ENCODE measurements at regions of chr13 and their contacts with region 1.

Region 1: DNA sequence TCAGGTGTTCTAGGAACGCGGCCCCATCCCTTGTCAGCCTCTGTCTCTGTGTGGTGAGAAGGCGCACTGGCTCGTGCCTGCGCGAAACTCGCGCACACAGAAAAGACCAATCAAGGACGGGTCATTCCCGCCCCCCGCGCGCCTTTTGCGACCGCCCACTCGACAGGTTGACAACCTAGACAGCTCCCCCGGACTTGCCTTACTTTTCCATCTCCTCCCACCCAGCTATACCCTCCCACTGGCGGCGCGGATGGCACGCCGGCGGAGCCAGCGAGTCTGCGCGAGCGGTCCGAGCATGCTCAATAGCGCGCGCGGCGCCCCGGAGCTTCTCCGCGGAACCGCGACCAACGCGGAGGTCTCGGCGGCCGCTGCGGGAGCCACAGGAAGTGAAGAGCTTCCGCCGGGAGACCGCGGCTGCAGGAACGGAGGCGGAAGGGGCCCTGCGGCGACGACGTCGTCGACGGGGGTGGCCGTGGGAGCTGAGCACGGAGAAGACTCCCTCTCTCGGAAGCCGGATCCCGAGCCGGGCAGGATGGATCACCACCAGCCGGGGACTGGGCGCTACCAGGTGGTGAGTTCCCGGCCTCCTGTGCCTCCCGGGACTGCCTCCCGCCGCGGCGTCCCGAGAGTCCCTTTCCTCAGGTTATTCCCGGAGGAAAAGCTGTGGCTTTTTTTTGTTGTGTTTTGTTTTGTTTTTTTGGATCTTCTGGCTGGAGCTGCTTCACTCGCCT is at the start of gene NDFIP2:
- DNase-seq: peak; percentile 57 to 93 (median 75)
- ATAC-seq: peak; percentile 82
- H3K4me3 ChIP-seq: peak within 1 kb of the TSS; percentile 82
- H3K4me3 Mint-ChIP-seq: peak within 1 kb of the TSS; percentile 95
- H3K27ac ChIP-seq: peak within 1 kb of the TSS in 1 of 2 donors; percentile 46
- H3K27ac Mint-ChIP-seq: peak within 1 kb of the TSS; percentile 79
- H3K4me1 ChIP-seq: peaks cover 20% of the 10 kb centered on the region
- H3K4me1 Mint-ChIP-seq: peaks cover 51% of the 10 kb centered on the region
- H3K27me3 ChIP-seq: no peaks in the 10 kb centered on the region
- H3K27me3 Mint-ChIP-seq: no peaks in the 10 kb centered on the region
- CTCF ChIP-seq: no peak
- total RNA-seq, gene NDFIP2: 3.2 to 3.4 TPM

Region 2: DNA sequence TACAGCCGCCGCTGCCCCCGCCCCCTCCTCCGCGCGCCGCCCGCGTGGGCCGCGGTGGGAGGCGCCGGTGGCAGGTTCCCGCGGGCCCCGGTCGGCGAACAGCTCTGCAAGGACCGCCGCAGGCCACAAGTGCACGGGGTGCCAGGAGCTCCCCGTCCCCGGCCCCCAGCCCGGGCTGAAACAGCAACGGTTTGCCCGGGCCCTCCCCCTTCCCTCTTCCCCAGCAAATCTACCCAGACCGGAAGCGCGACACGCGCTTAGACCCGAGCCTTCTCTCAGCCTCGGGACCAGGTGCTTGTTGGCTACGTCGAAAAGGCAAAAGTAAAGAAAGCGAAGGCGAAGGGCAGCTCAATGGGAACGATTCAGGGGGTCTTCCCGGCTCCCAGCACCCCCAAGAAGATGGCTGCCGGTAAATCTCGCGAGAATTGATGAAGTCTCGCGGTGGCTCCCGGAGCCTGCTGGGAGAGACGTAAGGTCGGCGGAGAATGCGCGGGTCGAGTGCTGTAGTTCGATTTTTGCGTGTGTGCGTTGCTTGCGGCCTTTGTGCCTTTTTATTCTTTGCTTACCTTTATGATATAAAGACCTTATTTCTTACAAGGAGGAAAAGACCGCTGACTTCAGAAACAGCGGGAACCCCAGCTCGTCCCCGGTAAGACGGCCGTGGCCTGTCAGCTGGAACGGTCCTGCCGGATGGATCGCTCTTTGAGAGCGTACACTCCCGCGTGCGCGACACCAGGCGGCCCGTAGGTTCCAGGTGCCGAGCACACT is 75.1 kb before region 1 on chr13 and contains the start of gene RBM26:
- CTCF ChIA-PET with region 1: no interaction called
- POLR2A ChIA-PET with region 1: interaction called, 15 read pairs
- intact Hi-C with region 1: loop called in 1 of 2 experiments (anchors 5 kb)
- DNase-seq: peak; percentile 87 to 97 (median 92)
- ATAC-seq: peak; percentile 86
- H3K4me3 ChIP-seq: peak within 1 kb of the TSS; percentile 68
- H3K4me3 Mint-ChIP-seq: peak within 1 kb of the TSS; percentile 95
- H3K27ac ChIP-seq: peak within 1 kb of the TSS; percentile 93 to 95
- H3K27ac Mint-ChIP-seq: no peak within 1 kb of the TSS
- H3K4me1 ChIP-seq: peaks cover 21% of the 10 kb centered on the region
- H3K4me1 Mint-ChIP-seq: peaks cover 44% of the 10 kb centered on the region
- H3K27me3 ChIP-seq: no peaks in the 10 kb centered on the region
- H3K27me3 Mint-ChIP-seq: no peaks in the 10 kb centered on the region
- CTCF ChIP-seq: no peak
- total RNA-seq, gene RBM26: 67.3 to 68.0 TPM

Region 3: DNA sequence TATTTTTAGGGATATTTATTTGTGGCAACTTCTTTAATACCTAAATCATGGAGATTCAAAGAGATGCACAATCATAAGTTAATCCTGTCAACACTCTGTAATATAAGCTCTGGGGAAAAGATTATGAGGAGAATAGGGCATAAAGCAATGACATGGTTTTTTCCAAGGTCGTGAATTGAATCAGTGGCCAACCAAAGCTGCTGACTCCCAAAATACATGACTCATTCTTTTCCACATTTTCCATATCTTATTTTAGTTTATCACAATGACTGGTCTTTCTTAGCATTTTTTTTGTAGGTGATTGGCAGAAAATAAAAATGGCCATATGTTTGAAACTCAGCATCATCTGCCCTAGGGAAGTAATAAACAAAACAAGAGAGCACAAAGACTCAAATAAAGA is 46.6 kb before region 1 on chr13:
- CTCF ChIA-PET with region 1: no interaction called
- POLR2A ChIA-PET with region 1: no interaction called
- intact Hi-C with region 1: loop called in 1 of 2 experiments (anchors 5 kb)
- DNase-seq: no peak
- ATAC-seq: no peak
- H3K4me3 ChIP-seq: no peak overlapping the region
- H3K4me3 Mint-ChIP-seq: no peak overlapping the region
- H3K27ac ChIP-seq: no peak overlapping the region
- H3K27ac Mint-ChIP-seq: no peak overlapping the region
- H3K4me1 ChIP-seq: no peaks in the 10 kb centered on the region
- H3K4me1 Mint-ChIP-seq: no peaks in the 10 kb centered on the region
- H3K27me3 ChIP-seq: no peaks in the 10 kb centered on the region
- H3K27me3 Mint-ChIP-seq: no peaks in the 10 kb centered on the region
- CTCF ChIP-seq: no peak

Region 4: GRCh38 chr13:79451500-79451962 is 29.6 kb before region 1 on chr13:
- CTCF ChIA-PET with region 1: interaction called, 12 read pairs
- POLR2A ChIA-PET with region 1: interaction called, 8 read pairs
- intact Hi-C with region 1: no loop called
- DNase-seq: peak; percentile 53 to 93 (median 79)
- ATAC-seq: peak; percentile 99
- H3K4me3 ChIP-seq: no peak overlapping the region
- H3K4me3 Mint-ChIP-seq: peak overlapping the region; percentile 46
- H3K27ac ChIP-seq: peak overlapping the region in 1 of 2 donors; percentile 31
- H3K27ac Mint-ChIP-seq: peak overlapping the region; percentile 68
- H3K4me1 ChIP-seq: peaks cover 16% of the 10 kb centered on the region
- H3K4me1 Mint-ChIP-seq: peaks cover 63% of the 10 kb centered on the region
- H3K27me3 ChIP-seq: no peaks in the 10 kb centered on the region
- H3K27me3 Mint-ChIP-seq: no peaks in the 10 kb centered on the region
- CTCF ChIP-seq: no peak

Region 5: GRCh38 chr13:79491715-79492114 is 10.6 kb after region 1 on chr13:
- CTCF ChIA-PET with region 1: interaction called, 6 read pairs
- POLR2A ChIA-PET with region 1: interaction called, 4 read pairs
- intact Hi-C with region 1: loop called in 1 of 2 experiments (anchors 2 kb)
- DNase-seq: no peak
- ATAC-seq: no peak
- H3K4me3 ChIP-seq: no peak overlapping the region
- H3K4me3 Mint-ChIP-seq: peak overlapping the region; percentile 12
- H3K27ac ChIP-seq: no peak overlapping the region
- H3K27ac Mint-ChIP-seq: no peak overlapping the region
- H3K4me1 ChIP-seq: peaks cover 4% of the 10 kb centered on the region
- H3K4me1 Mint-ChIP-seq: peaks cover 72% of the 10 kb centered on the region
- H3K27me3 ChIP-seq: no peaks in the 10 kb centered on the region
- H3K27me3 Mint-ChIP-seq: no peaks in the 10 kb centered on the region
- CTCF ChIP-seq: no peak

Region 6: DNA sequence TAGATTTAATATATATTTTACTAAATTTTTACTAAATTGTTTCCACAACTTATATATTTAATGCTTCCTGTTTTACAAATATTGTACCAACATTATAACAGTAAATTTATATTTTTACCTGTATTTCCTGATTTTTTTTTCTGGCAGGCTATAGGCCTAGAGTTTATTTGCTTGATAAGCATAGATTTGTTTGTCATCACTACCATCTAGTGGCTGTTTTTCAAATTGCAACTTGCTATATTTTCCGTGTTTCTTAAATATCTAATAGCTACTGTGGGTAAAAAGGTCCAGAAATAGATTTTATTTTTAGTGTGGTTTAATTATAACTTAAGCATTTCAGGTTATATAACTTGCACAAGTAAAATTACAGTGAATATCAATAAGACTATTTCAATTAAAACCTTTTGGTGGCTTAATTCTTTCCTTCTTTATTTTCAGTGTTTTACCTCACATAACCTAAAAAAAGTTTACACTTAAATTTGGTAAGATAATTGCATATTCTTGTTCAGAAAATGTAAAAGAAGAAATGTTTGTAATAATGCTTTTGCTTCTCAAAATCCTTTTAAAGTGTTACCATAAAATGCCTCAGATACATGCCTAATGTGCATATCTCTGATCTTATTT is 60.4 kb after region 1 on chr13:
- CTCF ChIA-PET with region 1: interaction called, 6 read pairs
- POLR2A ChIA-PET with region 1: interaction called, 5 read pairs
- intact Hi-C with region 1: loop called in 1 of 2 experiments (anchors 5 kb)
- DNase-seq: peak in 3 of 14 experiments; percentile 73 to 82 (median 80)
- ATAC-seq: peak; percentile 63
- H3K4me3 ChIP-seq: no peak overlapping the region
- H3K4me3 Mint-ChIP-seq: no peak overlapping the region
- H3K27ac ChIP-seq: no peak overlapping the region
- H3K27ac Mint-ChIP-seq: no peak overlapping the region
- H3K4me1 ChIP-seq: no peaks in the 10 kb centered on the region
- H3K4me1 Mint-ChIP-seq: no peaks in the 10 kb centered on the region
- H3K27me3 ChIP-seq: no peaks in the 10 kb centered on the region
- H3K27me3 Mint-ChIP-seq: no peaks in the 10 kb centered on the region
- CTCF ChIP-seq: peak; percentile 97

Region 7: DNA sequence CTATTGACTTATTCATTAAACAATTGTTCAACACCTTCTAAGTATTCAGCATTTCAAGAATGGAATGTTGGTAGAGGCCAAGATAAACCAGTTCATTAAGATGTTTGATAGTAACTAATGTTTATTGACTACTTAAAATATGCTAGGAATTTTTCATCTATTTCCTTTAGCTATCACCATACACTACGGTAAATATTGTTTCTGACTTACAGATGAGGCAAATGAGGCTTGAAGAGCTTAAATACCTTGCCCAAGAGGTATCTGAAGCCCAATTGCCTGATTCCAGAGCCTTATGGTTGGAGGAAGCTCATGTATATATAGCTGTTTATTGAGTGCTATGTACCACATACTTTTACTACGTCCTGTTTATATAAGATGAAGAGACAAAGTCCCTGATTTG is 286.0 kb after region 1 on chr13:
- CTCF ChIA-PET with region 1: no interaction called
- POLR2A ChIA-PET with region 1: no interaction called
- intact Hi-C with region 1: no loop called
- DNase-seq: no peak
- ATAC-seq: no peak
- H3K4me3 ChIP-seq: no peak overlapping the region
- H3K4me3 Mint-ChIP-seq: no peak overlapping the region
- H3K27ac ChIP-seq: no peak overlapping the region
- H3K27ac Mint-ChIP-seq: no peak overlapping the region
- H3K4me1 ChIP-seq: no peaks in the 10 kb centered on the region
- H3K4me1 Mint-ChIP-seq: no peaks in the 10 kb centered on the region
- H3K27me3 ChIP-seq: no peaks in the 10 kb centered on the region
- H3K27me3 Mint-ChIP-seq: no peaks in the 10 kb centered on the region
- CTCF ChIP-seq: no peak

Measured in CD4-positive, alpha-beta T cell (primary cell).